Posterior vena cava (tissue), 2 donors: ENCODE measurements at regions of chr21 and their contacts with region 1.

Region 1: DNA sequence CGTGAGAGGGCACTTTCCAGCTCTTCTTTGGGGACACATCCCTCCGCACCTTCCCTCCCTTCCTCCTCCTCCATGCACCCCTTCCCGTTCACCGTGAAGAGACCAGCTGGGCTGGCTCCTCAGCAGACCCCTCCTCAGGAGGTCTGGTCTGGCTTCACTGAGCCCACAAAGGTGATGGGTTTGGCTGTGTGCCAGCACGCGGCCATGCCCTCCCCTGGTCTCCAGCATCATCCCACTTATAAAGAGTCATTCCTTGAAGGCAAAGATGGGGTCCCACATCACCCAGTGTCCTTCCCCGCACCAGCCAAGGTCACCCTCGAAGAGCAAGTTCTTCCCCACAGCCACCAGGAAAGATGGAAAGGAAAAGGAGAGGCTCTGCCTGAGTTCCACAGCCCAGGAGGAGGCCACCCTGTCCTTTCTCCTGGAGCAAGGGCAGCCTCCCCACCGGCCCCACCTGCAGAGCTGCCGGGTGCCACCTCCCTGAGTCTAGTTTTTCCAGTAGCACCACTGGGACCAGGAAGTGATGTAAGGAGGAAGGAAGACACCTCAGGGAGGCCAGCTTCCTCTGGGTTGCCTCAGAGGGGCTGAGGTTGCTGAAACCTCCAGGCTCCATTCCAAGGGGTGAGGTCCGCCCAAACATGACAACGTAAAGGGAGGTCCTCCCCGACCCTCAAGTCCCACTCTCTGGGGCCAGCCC is 32.8 kb downstream of the RIPK4 start:
- DNase-seq: no peak

Region 2: GRCh38 chr21:41713495-41714281 is 20.4 kb before region 1 on chr21:
- intact Hi-C with region 1: loop called in 1 of 2 experiments (anchors 1 kb)
- DNase-seq: peak; percentile 53

Region 3: GRCh38 chr21:41953831-41954653 is 219.9 kb after region 1 on chr21 and contains the start of gene C2CD2:
- intact Hi-C with region 1: no loop called
- DNase-seq: peak; percentile 91
- total RNA-seq, gene C2CD2: 28.0 to 43.1 TPM